H1 (cell line): ENCODE measurements at regions of chr20 and their contacts with region 1.

Region 1: GRCh38 chr20:19661717-19662636 is 96.1 kb upstream of the RIN2 start:
- DNase-seq: peak; percentile 34 to 74
- H3K4me3 ChIP-seq: no peak overlapping the region
- H3K27ac ChIP-seq: no peak overlapping the region
- H3K4me1 ChIP-seq: peaks cover 0 to 9% (median 1%) of the 10 kb centered on the region in 4 experiments; a peak in 2 of 7 replicates
- H3K27me3 ChIP-seq: 0 out of 7 replicates have a peak, but pooled peaks cover 0 to 3% (median 0%) of the 10 kb centered on the region in 4 experiments
- CTCF ChIP-seq: peak; percentile 79 to 93 (median 88)
- EP300 ChIP-seq: no peak
- POLR2A ChIP-seq: no peak
- RAD21 ChIP-seq: peak; percentile 98 to 99

Region 2: GRCh38 chr20:19205977-19206396 is 456.0 kb before region 1 on chr20:
- CTCF ChIA-PET with region 1: interaction called, 32 read pairs
- POLR2A ChIA-PET with region 1: no interaction called
- DNase-seq: peak in 1 of 2 experiments; percentile 98
- H3K4me3 ChIP-seq: no peak overlapping the region
- H3K27ac ChIP-seq: no peak overlapping the region
- H3K4me1 ChIP-seq: peaks cover 9 to 25% (median 14%) of the 10 kb centered on the region in 4 experiments
- H3K27me3 ChIP-seq: peaks cover 0 to 2% (median 0%) of the 10 kb centered on the region in 4 experiments; a peak in 2 of 7 replicates
- CTCF ChIP-seq: peak; percentile 89 to 93 (median 89)
- EP300 ChIP-seq: no peak
- POLR2A ChIP-seq: no peak
- RAD21 ChIP-seq: peak; percentile 89 to 93

Region 3: DNA sequence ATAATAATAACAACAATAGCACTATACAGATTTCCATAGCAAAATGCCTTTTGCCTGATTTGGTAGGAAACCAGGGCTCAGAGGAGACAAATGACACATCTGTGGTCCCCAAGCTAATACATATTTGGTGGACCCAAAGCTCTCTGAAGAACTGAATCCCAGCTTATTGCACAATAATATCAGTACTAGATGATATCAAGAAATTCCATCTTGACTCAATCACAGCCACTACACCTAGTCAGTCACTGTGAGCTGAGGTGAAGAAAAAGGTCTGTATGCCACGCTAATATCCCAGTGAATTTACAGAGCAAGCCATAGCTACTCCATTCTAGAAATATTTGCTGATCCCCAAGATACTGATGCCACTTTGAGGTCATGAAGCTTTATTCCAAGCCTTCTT is 174.5 kb before region 1 on chr20:
- CTCF ChIA-PET with region 1: no interaction called
- POLR2A ChIA-PET with region 1: no interaction called
- DNase-seq: no peak
- H3K4me3 ChIP-seq: no peak overlapping the region
- H3K27ac ChIP-seq: no peak overlapping the region
- H3K4me1 ChIP-seq: no peaks in the 10 kb centered on the region
- H3K27me3 ChIP-seq: no peaks in the 10 kb centered on the region; a peak in 1 of 7 replicates
- CTCF ChIP-seq: no peak
- EP300 ChIP-seq: no peak
- POLR2A ChIP-seq: no peak
- RAD21 ChIP-seq: no peak

Region 4: DNA sequence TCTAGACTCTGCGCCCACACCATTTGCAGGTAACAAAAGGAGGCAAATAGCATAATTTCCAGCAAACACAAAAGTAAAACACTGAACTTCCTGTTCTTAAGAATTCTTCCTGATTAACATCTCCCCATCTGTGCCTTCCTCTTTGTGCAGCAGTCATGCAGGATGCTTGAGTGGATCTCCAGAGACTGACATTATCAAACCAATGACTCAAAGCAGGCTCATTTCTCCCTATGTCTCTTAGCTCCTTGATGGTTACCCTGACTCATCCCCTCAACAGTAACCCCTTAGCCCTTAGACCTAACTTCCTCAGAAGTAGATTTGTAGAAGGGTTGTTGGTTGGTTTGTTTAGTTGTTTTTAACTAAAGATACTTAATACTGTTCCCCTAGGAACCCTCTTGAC is 40.9 kb before region 1 on chr20:
- CTCF ChIA-PET with region 1: interaction called, 85 read pairs
- POLR2A ChIA-PET with region 1: no interaction called
- DNase-seq: no peak
- H3K4me3 ChIP-seq: peak overlapping the region in 1 of 4 experiments; percentile 19; a peak in 1 of 8 replicates
- H3K27ac ChIP-seq: no peak overlapping the region
- H3K4me1 ChIP-seq: peaks cover 0 to 24% (median 8%) of the 10 kb centered on the region in 4 experiments; a peak in 3 of 7 replicates
- H3K27me3 ChIP-seq: no peaks in the 10 kb centered on the region
- CTCF ChIP-seq: no peak
- EP300 ChIP-seq: no peak
- POLR2A ChIP-seq: no peak
- RAD21 ChIP-seq: no peak

Region 5: GRCh38 chr20:19633985-19634384 is 28.0 kb before region 1 on chr20:
- CTCF ChIA-PET with region 1: interaction called, 85 read pairs
- POLR2A ChIA-PET with region 1: no interaction called
- DNase-seq: no peak
- H3K4me3 ChIP-seq: no peak overlapping the region
- H3K27ac ChIP-seq: no peak overlapping the region
- H3K4me1 ChIP-seq: peaks cover 0 to 3% (median 0%) of the 10 kb centered on the region in 4 experiments; a peak in 1 of 7 replicates
- H3K27me3 ChIP-seq: no peaks in the 10 kb centered on the region
- CTCF ChIP-seq: no peak
- EP300 ChIP-seq: no peak
- POLR2A ChIP-seq: no peak
- RAD21 ChIP-seq: no peak

Region 6: DNA sequence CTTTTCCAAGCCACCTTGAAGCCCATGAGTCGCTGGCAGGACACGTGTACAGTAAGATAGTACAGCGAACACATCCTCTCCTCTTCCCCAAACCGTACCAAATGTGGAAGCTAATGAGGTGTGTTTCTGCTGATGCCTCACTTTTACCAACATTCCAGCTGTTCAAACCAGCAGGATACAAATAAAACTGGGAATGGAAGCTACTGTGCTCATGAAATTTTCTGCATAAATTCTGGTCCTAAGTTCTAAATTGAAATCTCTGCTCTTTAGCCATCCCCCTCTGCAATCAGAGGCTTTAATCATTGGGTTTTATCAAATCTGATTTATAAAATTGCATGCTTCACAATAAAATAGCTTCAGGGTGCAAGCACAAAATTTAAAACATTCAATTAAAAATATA is 14.2 kb after region 1 on chr20:
- CTCF ChIA-PET with region 1: interaction called, 11 read pairs
- POLR2A ChIA-PET with region 1: no interaction called
- DNase-seq: no peak
- H3K4me3 ChIP-seq: no peak overlapping the region
- H3K27ac ChIP-seq: no peak overlapping the region
- H3K4me1 ChIP-seq: no peaks in the 10 kb centered on the region
- H3K27me3 ChIP-seq: no peaks in the 10 kb centered on the region
- CTCF ChIP-seq: no peak
- EP300 ChIP-seq: no peak
- POLR2A ChIP-seq: no peak
- RAD21 ChIP-seq: no peak

Region 7: GRCh38 chr20:19742974-19743639 is 81.1 kb after region 1 on chr20:
- CTCF ChIA-PET with region 1: no interaction called
- POLR2A ChIA-PET with region 1: no interaction called
- DNase-seq: no peak
- H3K4me3 ChIP-seq: no peak overlapping the region
- H3K27ac ChIP-seq: no peak overlapping the region
- H3K4me1 ChIP-seq: peaks cover 0 to 5% (median under 1%) of the 10 kb centered on the region in 4 experiments; a peak in 2 of 7 replicates
- H3K27me3 ChIP-seq: no peaks in the 10 kb centered on the region; a peak in 1 of 7 replicates
- CTCF ChIP-seq: no peak
- EP300 ChIP-seq: no peak
- POLR2A ChIP-seq: no peak
- RAD21 ChIP-seq: no peak